GM10248 (cell line): ENCODE measurements at regions of chr1 and their contacts with region 1.

Region 1: GRCh38 chr1:183655562-183656075 is 2.5 kb upstream of the APOBEC4 start:
- DNase-seq: peak; percentile 78
- CTCF ChIP-seq: peak; percentile 69

Region 2: GRCh38 chr1:183635606-183636333 is 19.8 kb before region 1 on chr1 and contains the start of gene ARPC5:
- CTCF ChIA-PET with region 1: interaction called, 14 read pairs
- POLR2A ChIA-PET with region 1: interaction called, 3 read pairs
- DNase-seq: peak; percentile 96
- CTCF ChIP-seq: no peak

Region 3: DNA sequence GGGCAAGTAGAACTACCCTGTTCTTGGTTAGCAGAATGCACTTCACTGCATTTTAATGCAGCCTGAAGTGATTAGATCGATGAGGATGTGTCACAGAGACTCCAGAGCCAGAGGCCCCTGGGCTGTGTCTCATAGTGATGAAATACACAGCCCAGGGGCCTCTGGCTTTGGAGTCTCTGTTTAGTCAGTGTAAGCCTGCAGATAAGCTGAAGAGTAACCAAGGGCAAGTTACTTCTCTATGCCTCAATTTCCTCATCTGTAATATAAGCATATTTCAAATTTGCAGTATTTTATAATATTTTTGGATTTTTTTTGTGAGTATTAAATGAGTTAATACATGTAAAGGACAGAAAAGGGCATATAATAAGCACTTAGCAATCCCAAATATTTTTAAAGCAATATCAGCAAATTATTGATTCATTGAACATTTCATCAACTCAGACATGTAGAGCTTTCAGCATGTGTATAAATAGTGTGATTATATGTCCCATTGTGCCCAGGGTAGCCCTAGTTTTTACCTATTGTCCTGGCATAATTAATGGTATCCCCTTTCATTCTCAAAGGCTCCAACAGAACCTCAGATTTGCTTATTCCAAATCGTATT is 21.1 kb after region 1 on chr1:
- CTCF ChIA-PET with region 1: interaction called, 15 read pairs
- POLR2A ChIA-PET with region 1: no interaction called
- DNase-seq: no peak
- CTCF ChIP-seq: no peak

Region 4: DNA sequence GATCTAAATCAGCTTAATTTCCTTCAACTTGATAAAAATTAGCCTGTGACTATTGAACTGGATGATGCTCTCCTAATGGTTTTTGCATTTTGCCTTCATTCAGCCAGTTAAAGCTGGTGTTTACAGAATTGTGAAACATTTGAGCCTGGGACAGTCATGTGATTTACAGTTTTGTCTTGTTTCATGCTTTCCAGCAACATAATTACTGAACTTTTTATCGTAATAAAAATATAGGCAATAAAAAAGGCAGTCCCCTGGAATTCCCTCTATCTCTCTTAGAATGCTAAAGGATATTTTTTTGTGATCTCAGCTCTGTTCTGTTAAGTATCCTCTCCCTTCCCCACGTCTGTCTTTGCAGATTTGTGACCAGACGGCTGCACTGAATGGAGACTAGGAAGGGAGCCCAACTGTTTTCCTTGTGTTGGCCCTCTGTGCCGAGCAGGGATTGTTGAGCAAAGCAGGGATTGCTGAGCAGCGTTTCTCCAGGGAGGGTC is 79.0 kb after region 1 on chr1:
- CTCF ChIA-PET with region 1: no interaction called
- POLR2A ChIA-PET with region 1: no interaction called
- DNase-seq: no peak
- CTCF ChIP-seq: no peak

Region 5: GRCh38 chr1:183859831-183860230 is 204.2 kb after region 1 on chr1:
- CTCF ChIA-PET with region 1: no interaction called
- POLR2A ChIA-PET with region 1: no interaction called
- DNase-seq: no peak
- CTCF ChIP-seq: no peak

Region 6: DNA sequence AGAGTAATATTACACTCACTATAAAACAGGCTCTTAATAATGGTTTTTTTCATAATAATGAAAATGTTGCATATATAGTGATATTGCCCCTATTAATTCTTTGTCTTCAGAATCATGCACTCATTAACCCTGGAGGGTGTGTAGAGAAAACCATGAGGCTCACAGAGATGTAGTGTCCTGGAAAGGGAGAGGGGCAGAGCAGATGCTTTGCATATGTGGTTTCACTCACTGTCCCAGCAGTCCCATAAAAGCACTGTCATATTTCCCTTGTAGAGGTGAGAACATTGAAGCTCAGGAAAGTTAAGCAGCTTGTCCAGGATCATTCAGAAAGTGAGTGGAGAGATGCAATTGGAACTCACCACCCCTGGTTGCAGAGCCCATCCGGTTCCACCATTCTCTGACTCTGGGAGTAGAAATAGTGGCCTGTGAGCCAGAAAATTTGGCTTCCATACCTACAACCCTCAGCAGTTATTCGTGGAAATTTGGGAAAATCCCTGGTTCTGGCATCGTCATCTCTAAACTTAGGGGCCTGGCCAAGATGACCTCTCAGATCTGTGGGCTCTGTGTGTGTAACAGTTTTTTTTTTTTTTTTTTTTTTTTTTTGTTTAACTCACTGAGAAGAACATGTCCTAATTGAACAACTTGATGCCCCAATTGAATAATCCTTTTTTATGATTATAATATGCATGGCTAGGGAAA is 235.7 kb after region 1 on chr1:
- CTCF ChIA-PET with region 1: interaction called, 12 read pairs
- POLR2A ChIA-PET with region 1: no interaction called
- DNase-seq: no peak
- CTCF ChIP-seq: no peak

Region 7: GRCh38 chr1:183932412-183932811 is 276.8 kb after region 1 on chr1:
- CTCF ChIA-PET with region 1: interaction called, 15 read pairs
- POLR2A ChIA-PET with region 1: no interaction called
- DNase-seq: no peak
- CTCF ChIP-seq: no peak

Region 8: DNA sequence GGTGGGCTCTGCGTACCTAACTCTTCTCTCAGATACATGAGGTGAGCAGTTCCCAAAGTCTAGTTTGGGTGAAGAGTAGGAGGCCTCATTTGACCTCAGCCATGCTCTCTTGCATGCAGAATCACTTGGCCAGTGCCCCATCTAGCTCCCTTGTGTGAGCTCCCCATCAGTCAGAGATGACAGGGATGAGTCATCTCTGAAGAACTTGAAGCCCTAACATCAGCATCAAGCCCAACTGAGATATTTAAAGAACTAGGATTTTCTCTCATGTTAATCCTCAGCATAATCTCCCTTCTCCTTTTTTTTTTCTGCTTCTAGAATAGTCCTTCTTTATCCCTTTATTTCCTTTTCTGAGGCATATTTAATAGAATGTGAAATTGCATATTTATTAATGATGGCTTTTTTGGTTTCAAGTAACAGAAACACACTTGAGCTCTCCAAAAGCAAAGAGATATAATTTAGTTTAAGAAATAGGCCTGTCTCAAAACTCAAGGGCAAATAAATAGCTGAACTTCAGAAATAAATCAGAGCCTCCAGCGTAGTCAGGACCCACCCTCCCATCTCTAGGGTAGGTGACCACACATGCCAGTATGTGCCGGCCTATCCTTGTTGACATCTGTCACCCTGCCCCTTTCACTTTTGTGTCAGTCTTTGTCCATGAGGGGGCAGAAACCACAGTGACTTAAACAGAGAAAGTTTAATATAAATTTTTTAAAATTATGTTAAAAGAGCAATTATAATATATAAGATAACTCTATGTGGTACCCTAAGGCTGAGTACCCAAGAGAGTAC is 508.3 kb after region 1 on chr1:
- CTCF ChIA-PET with region 1: no interaction called
- POLR2A ChIA-PET with region 1: no interaction called
- DNase-seq: peak; percentile 68
- CTCF ChIP-seq: no peak